CD8-positive, alpha-beta T cell (primary cell): ENCODE measurements at regions of chr15 and their contacts with region 1.

Region 1: GRCh38 chr15:100596792-100597191 is 5.2 kb downstream of the LINS1 start:
- DNase-seq: peak; percentile 49 to 95 (median 84)
- ATAC-seq: peak; percentile 86
- H3K4me3 ChIP-seq: peak overlapping the region; percentile 41 to 47
- H3K4me3 Mint-ChIP-seq: peak overlapping the region; percentile 85
- H3K27ac ChIP-seq: peak overlapping the region; percentile 70 to 85
- H3K27ac Mint-ChIP-seq: peak overlapping the region; percentile 97
- H3K4me1 ChIP-seq: peaks cover 88% of the 10 kb centered on the region
- H3K4me1 Mint-ChIP-seq: peaks cover 77% of the 10 kb centered on the region
- H3K27me3 ChIP-seq: no peaks in the 10 kb centered on the region
- H3K27me3 Mint-ChIP-seq: no peaks in the 10 kb centered on the region
- CTCF ChIP-seq: no peak

Region 2: DNA sequence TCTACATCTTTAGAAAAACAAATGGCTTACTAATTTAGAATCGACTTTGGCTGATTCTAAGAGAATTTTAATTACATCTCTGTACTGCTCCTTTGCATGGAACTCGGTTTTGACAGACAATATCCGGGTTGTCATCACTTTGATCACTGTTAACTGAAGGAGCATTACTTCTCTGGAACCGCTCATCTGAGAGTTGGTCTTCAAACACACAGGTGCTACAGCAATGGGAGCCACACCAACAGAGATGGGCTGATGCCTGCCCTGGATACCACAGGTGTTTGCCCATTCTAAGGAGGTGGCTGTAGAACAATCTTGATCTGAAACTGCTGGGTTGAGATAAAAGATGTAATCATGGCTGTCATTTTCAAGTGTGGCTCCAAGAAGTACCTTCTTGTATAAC is 16.4 kb before region 1 on chr15:
- CTCF ChIA-PET with region 1: interaction called, 4 read pairs
- POLR2A ChIA-PET with region 1: no interaction called
- intact Hi-C with region 1: loop called in 1 of 2 experiments (anchors 2 kb)
- DNase-seq: peak in 1 of 9 experiments; percentile 25
- ATAC-seq: peak; percentile 40
- H3K4me3 ChIP-seq: no peak overlapping the region
- H3K4me3 Mint-ChIP-seq: peak overlapping the region; percentile 16
- H3K27ac ChIP-seq: peak overlapping the region; percentile 3 to 4
- H3K27ac Mint-ChIP-seq: peak overlapping the region; percentile 92
- H3K4me1 ChIP-seq: peaks cover 8% of the 10 kb centered on the region
- H3K4me1 Mint-ChIP-seq: peaks cover 65% of the 10 kb centered on the region
- H3K27me3 ChIP-seq: no peaks in the 10 kb centered on the region
- H3K27me3 Mint-ChIP-seq: no peaks in the 10 kb centered on the region
- CTCF ChIP-seq: no peak